CD4-positive, alpha-beta memory T cell (primary cell): ENCODE measurements at regions of chr6 and their contacts with region 1.

Region 1: GRCh38 chr6:134152767-134153485 is 100.5 kb upstream of the SLC2A12 start:
- DNase-seq: no peak
- H3K4me3 ChIP-seq: no peak overlapping the region
- H3K4me3 Mint-ChIP-seq: no peak overlapping the region
- H3K27ac ChIP-seq: no peak overlapping the region
- H3K27ac Mint-ChIP-seq: no peak overlapping the region
- H3K4me1 ChIP-seq: no peaks in the 10 kb centered on the region
- H3K4me1 Mint-ChIP-seq: no peaks in the 10 kb centered on the region
- H3K27me3 ChIP-seq: no peaks in the 10 kb centered on the region
- H3K27me3 Mint-ChIP-seq: peaks cover 0 to 7% of the 10 kb centered on the region in 2 donors

Region 2: GRCh38 chr6:134822920-134823709 is 670.2 kb after region 1 on chr6:
- CTCF ChIA-PET with region 1: interaction called, 38 read pairs
- POLR2A ChIA-PET with region 1: no interaction called
- intact Hi-C with region 1: loop called (anchors 1 kb)
- DNase-seq: peak in 4 of 5 donors; percentile 46 to 54 (median 51)
- H3K4me3 ChIP-seq: no peak overlapping the region
- H3K4me3 Mint-ChIP-seq: no peak overlapping the region
- H3K27ac ChIP-seq: no peak overlapping the region
- H3K27ac Mint-ChIP-seq: no peak overlapping the region
- H3K4me1 ChIP-seq: no peaks in the 10 kb centered on the region
- H3K4me1 Mint-ChIP-seq: peaks cover 0 to 3% (median 0%) of the 10 kb centered on the region in 4 donors
- H3K27me3 ChIP-seq: no peaks in the 10 kb centered on the region
- H3K27me3 Mint-ChIP-seq: peaks cover 3 to 7% of the 10 kb centered on the region in 2 donors